SK-N-SH (cell line): ENCODE measurements at regions of chr9 and their contacts with region 1.

Region 1: GRCh38 chr9:4762108-4762885 is 21.3 kb upstream of the AK3 start:
- DNase-seq: peak; percentile 51
- H3K4me3 ChIP-seq: peak overlapping the region in 1 of 2 experiments; percentile 38; a peak in 1 of 4 replicates
- H3K27ac ChIP-seq: no peak overlapping the region
- H3K4me1 ChIP-seq: peaks cover 7 to 8% of the 10 kb centered on the region in 2 experiments; a peak in 3 of 4 replicates
- H3K27me3 ChIP-seq: no peaks in the 10 kb centered on the region
- CTCF ChIP-seq: peak; percentile 91
- EP300 ChIP-seq: no peak
- RAD21 ChIP-seq: peak; percentile 91

Region 2: GRCh38 chr9:4740638-4741364 is 21.5 kb before region 1 on chr9 and contains the start of gene AK3:
- CTCF ChIA-PET with region 1: interaction called, 18 read pairs
- POLR2A ChIA-PET with region 1: no interaction called
- DNase-seq: peak; percentile 99
- H3K4me3 ChIP-seq: peak within 1 kb of the TSS; percentile 73 to 92
- H3K27ac ChIP-seq: peak within 1 kb of the TSS; percentile 67 to 78
- H3K4me1 ChIP-seq: peaks cover 5 to 13% of the 10 kb centered on the region in 2 experiments; a peak in 2 of 4 replicates
- H3K27me3 ChIP-seq: no peaks in the 10 kb centered on the region
- CTCF ChIP-seq: peak; percentile 23; the same call in 1 of the 2 replicates
- EP300 ChIP-seq: no peak
- RAD21 ChIP-seq: peak; percentile 42
- polyA plus RNA-seq, gene AK3: 20.6 and 30.8 TPM in 2 replicates

Region 3: GRCh38 chr9:4750023-4750673 is 12.1 kb before region 1 on chr9:
- CTCF ChIA-PET with region 1: interaction called, 18 read pairs
- POLR2A ChIA-PET with region 1: no interaction called
- DNase-seq: no peak
- H3K4me3 ChIP-seq: no peak overlapping the region; a peak in 1 of 4 replicates
- H3K27ac ChIP-seq: no peak overlapping the region
- H3K4me1 ChIP-seq: no peaks in the 10 kb centered on the region
- H3K27me3 ChIP-seq: no peaks in the 10 kb centered on the region
- CTCF ChIP-seq: peak; percentile 72
- EP300 ChIP-seq: no peak
- RAD21 ChIP-seq: peak; percentile 50

Region 4: GRCh38 chr9:4792572-4793458 is 30.5 kb after region 1 on chr9 and contains the start of gene RCL1:
- CTCF ChIA-PET with region 1: interaction called, 25 read pairs
- POLR2A ChIA-PET with region 1: no interaction called
- DNase-seq: peak; percentile 98
- H3K4me3 ChIP-seq: peak within 1 kb of the TSS; percentile 78 to 89
- H3K27ac ChIP-seq: peak within 1 kb of the TSS; percentile 74 to 88
- H3K4me1 ChIP-seq: peaks cover 0 to 7% of the 10 kb centered on the region in 2 experiments; a peak in 2 of 4 replicates
- H3K27me3 ChIP-seq: no peaks in the 10 kb centered on the region
- CTCF ChIP-seq: no peak
- EP300 ChIP-seq: peak in 1 of 2 experiments; percentile 57; a peak in 1 of 4 replicates
- RAD21 ChIP-seq: no peak; the same call in 1 of the 2 replicates
- polyA plus RNA-seq, gene RCL1: 18.4 and 18.6 TPM in 2 replicates

Region 5: DNA sequence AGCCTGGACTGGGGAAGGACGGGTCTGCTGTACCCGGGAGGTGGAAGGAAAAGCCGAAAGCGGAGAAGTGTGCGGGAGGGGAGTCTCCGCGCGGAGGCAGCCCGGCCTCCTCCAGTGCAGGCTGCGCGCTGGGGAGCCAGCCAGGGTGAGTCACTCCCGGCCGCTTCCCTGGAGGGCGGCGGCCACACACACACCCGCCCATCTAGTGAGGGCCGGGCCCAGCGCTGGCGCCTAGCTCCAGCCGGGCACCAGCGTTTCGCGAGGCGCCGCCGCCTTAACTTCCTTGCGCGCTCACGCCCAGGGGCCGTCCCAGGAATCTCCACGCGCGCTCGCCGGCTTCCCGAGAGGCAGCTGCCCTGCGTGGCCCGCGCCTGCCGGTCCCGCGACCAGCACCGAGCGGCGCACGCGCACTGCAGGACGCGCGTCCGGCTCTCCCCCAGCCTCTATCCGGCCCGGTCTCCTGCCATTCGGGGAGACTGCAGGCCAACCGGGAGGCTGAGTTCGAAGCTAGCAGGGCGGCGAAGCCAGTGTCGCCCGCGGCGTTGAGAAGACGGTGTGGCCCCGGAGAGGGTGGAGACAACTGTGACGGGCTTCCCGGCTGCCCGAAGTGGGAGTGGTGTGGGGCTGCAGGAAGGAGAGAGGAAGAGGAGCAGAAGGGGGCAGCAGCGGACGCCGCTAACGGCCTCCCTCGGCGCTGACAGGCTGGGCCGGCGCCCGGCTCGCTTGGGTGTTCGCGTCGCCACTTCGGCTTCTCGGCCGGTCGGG is 222.5 kb after region 1 on chr9 and contains the start of gene JAK2:
- CTCF ChIA-PET with region 1: interaction called, 102 read pairs
- POLR2A ChIA-PET with region 1: no interaction called
- DNase-seq: peak; percentile 91
- H3K4me3 ChIP-seq: peak within 1 kb of the TSS; percentile 82 to 86
- H3K27ac ChIP-seq: peak within 1 kb of the TSS; percentile 94 to 97
- H3K4me1 ChIP-seq: peaks cover 12 to 14% of the 10 kb centered on the region in 2 experiments; a peak in 3 of 4 replicates
- H3K27me3 ChIP-seq: no peaks in the 10 kb centered on the region
- CTCF ChIP-seq: peak; percentile 40
- EP300 ChIP-seq: 0 out of 4 replicates have a peak, but pooled peaks of 1 of the 2 experiments have one; percentile 13
- RAD21 ChIP-seq: 0 out of 2 replicates have a peak, but pooled peaks have one; percentile 2
- polyA plus RNA-seq, gene JAK2: 1.3 and 2.3 TPM in 2 replicates

Region 6: DNA sequence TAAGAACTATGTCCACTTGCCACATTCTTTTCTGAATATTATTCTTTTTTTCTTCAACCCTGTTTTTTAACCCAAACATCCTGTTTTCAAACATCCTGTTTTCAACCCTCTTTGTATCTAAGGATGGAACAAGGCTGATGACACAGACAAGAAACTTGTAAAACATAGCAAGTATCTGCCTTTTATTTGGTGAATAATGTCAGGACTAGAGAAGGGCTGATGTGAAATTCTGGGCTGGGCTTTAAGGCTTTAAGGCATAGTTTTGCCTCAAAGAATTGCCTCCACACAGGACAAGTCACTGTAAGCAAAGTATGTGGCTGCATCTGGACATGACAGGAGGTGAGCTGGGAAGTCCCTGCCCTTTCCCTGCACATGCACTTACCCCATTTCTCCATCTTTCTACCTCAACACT is 824.1 kb after region 1 on chr9:
- CTCF ChIA-PET with region 1: interaction called, 12 read pairs
- POLR2A ChIA-PET with region 1: no interaction called
- DNase-seq: no peak
- H3K4me3 ChIP-seq: no peak overlapping the region
- H3K27ac ChIP-seq: peak overlapping the region in 1 of 2 experiments; percentile 86; a peak in 2 of 4 replicates
- H3K4me1 ChIP-seq: peaks cover 0 to 15% of the 10 kb centered on the region in 2 experiments; a peak in 2 of 4 replicates
- H3K27me3 ChIP-seq: no peaks in the 10 kb centered on the region
- CTCF ChIP-seq: no peak
- EP300 ChIP-seq: no peak
- RAD21 ChIP-seq: no peak